Naive thymus-derived CD4-positive, alpha-beta T cell (primary cell): ENCODE measurements at regions of chr1 and their contacts with region 1.

Region 1: GRCh38 chr1:173255214-173255813 is 48.2 kb upstream of the TNFSF4 start:
- DNase-seq: no peak
- ATAC-seq: peak; percentile 31
- H3K4me3 ChIP-seq: no peak overlapping the region
- H3K4me3 Mint-ChIP-seq: no peak overlapping the region
- H3K27ac ChIP-seq: no peak overlapping the region
- H3K27ac Mint-ChIP-seq: no peak overlapping the region
- H3K4me1 ChIP-seq: no peaks in the 10 kb centered on the region
- H3K4me1 Mint-ChIP-seq: no peaks in the 10 kb centered on the region
- H3K27me3 ChIP-seq: no peaks in the 10 kb centered on the region
- H3K27me3 Mint-ChIP-seq: peaks cover 0 to 11% (median 0%) of the 10 kb centered on the region in 5 donors

Region 2: DNA sequence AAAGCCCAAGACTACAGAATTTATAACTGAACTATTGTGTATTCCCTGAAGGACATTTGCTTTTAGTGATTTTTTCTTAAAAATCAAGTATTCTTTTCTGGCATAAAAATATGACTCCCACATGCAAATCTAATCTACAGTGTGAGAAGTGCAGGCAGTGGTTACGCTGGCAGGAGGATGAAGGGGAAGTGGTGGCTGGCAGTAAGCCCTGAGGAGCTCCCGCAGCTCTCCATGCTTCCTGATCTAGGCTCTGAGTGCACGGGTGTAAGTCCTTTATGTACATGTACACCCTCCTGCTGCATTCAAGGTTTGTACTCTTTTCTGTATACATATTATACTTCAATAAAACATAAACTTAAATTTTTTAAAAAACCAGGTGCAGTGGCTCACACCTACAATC is 154.3 kb after region 1 on chr1:
- CTCF ChIA-PET with region 1: no interaction called
- POLR2A ChIA-PET with region 1: no interaction called
- intact Hi-C with region 1: loop called in 1 of 2 experiments (anchors 10 kb)
- DNase-seq: peak in 1 of 9 donors; percentile 11
- ATAC-seq: peak; percentile 71
- H3K4me3 ChIP-seq: no peak overlapping the region
- H3K4me3 Mint-ChIP-seq: peak overlapping the region in 4 of 10 donors; percentile 7 to 23 (median 20)
- H3K27ac ChIP-seq: no peak overlapping the region
- H3K27ac Mint-ChIP-seq: peak overlapping the region in 2 of 9 donors; percentile 12 to 24
- H3K4me1 ChIP-seq: peaks cover 7 to 8% of the 10 kb centered on the region in 2 donors
- H3K4me1 Mint-ChIP-seq: peaks cover 7 to 37% (median 32%) of the 10 kb centered on the region in 7 donors
- H3K27me3 ChIP-seq: no peaks in the 10 kb centered on the region
- H3K27me3 Mint-ChIP-seq: peaks cover 0 to 2% (median 0%) of the 10 kb centered on the region in 5 donors